ENCODE measurements at regions of chr4 and their contacts with region 1.

Region 1: DNA sequence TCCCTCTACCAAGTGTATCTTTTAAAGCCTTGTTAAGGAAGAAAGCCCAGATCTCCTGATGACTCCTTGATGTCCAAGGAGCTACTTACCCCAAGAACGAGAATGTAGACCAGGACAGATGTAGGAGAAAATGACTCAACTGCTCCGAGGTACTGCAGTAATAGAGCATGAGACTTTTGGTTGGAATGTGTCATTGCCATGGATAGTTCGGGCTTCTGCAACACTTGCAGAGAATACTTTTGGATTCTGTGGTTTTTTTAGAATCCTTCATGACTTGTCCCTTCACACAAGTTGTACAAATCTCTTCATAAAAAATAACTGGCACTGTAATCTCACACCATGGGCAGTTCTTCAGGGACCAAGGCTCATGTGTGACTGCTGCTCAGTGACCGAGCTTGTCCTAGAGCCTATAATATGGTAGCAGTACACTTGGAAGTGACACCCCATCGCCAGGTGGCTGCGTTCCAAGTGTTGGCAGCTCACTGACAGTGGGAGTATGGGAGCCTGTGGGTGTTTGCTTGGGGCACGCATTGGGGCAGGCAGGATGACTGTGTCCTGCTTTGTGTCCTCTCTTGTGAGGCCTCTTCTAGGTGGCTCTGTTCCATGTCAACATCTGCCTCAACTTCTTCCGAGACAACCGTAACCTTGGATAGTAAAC is 87.9 kb upstream of the WDR1 start:
- DNase-seq: no peak
- ATAC-seq: no peak
- H3K4me3 ChIP-seq: no peak overlapping the region
- H3K27ac ChIP-seq: peak overlapping the region; percentile 26
- H3K4me1 ChIP-seq: peaks cover 20 to 60% of the 10 kb centered on the region in 2 experiments
- H3K27me3 ChIP-seq: no peaks in the 10 kb centered on the region
- CTCF ChIP-seq: no peak
- EP300 ChIP-seq: no peak
- POLR2A ChIP-seq: no peak
- RAD21 ChIP-seq: no peak

Region 2: DNA sequence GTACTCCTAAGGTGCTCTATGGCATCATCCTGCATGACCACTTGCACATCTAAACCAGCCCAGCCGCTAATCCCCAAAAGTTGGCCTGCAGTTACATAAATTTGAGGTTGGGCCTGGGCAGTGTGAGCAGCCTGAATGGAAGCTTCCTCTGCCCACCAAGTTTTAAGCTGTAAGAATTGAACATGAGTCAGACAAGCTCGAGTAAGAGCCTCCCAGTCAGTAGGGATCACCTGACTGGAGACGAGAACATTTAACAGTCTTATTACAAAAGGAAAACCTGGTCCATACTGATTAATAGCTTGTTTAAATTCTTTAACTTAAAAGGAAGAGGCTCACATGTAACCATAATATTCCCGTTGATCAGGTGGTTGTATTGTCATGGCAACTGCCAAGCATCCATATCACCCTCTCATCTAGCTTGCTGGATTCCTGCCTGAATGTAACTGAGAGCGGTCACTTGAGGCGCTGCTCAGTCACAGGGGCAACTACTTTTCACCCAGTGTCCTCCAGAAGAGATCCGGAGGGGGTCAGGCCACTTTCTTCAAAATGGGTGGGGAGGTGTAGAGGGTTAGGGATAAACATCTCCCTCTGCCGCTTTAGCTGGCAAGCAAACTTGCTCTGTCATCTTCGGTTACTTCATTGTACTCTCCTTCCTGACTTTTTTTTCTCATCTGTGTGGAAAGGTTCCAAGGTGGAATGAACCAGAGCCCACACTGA is 31.3 kb before region 1 on chr4:
- CTCF ChIA-PET with region 1: no interaction called
- POLR2A ChIA-PET with region 1: no interaction called
- in situ Hi-C with region 1: no loop called
- intact Hi-C with region 1: loop called (anchors 1 kb)
- DNase-seq: peak; percentile 83 to 96 (median 86)
- ATAC-seq: peak; percentile 90
- H3K4me3 ChIP-seq: no peak overlapping the region; the same call in 1 of the 2 replicates
- H3K27ac ChIP-seq: peak overlapping the region; percentile 93
- H3K4me1 ChIP-seq: peaks cover 27 to 76% of the 10 kb centered on the region in 2 experiments
- H3K27me3 ChIP-seq: no peaks in the 10 kb centered on the region
- CTCF ChIP-seq: peak; percentile 90 to 97 (median 92)
- EP300 ChIP-seq: peak; percentile 95
- POLR2A ChIP-seq: no peak
- RAD21 ChIP-seq: peak; percentile 89 to 90

Region 3: DNA sequence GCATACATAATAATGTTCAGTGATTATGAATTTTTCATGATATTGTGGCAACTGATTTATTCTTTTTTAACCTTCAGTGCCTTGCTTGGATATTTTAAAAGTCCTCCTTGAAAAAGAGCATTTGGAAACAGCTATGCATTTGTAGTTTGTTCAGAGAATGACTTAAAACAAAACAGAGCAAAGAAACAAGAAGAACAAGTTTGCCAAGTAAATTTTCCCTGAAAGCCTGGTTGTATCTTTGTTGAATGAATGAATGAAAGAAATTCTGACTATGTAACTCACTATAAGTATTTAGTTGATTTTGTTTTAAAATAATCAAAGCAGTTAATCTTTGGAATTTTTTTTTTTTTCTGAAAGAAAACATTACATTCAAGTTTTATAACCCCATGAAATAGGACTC is 313.1 kb after region 1 on chr4:
- CTCF ChIA-PET with region 1: no interaction called
- POLR2A ChIA-PET with region 1: no interaction called
- in situ Hi-C with region 1: no loop called
- intact Hi-C with region 1: no loop called
- DNase-seq: no peak
- ATAC-seq: no peak
- H3K4me3 ChIP-seq: no peak overlapping the region
- H3K27ac ChIP-seq: no peak overlapping the region
- H3K4me1 ChIP-seq: no peaks in the 10 kb centered on the region
- H3K27me3 ChIP-seq: no peaks in the 10 kb centered on the region
- CTCF ChIP-seq: no peak
- EP300 ChIP-seq: no peak
- POLR2A ChIP-seq: no peak
- RAD21 ChIP-seq: no peak